Activated CD4-positive, alpha-beta memory T cell treated with anti-CD3 and anti-CD28 coated beads for 36 hours (primary cell): ENCODE measurements at regions of chr1 and their contacts with region 1.

Region 1: DNA sequence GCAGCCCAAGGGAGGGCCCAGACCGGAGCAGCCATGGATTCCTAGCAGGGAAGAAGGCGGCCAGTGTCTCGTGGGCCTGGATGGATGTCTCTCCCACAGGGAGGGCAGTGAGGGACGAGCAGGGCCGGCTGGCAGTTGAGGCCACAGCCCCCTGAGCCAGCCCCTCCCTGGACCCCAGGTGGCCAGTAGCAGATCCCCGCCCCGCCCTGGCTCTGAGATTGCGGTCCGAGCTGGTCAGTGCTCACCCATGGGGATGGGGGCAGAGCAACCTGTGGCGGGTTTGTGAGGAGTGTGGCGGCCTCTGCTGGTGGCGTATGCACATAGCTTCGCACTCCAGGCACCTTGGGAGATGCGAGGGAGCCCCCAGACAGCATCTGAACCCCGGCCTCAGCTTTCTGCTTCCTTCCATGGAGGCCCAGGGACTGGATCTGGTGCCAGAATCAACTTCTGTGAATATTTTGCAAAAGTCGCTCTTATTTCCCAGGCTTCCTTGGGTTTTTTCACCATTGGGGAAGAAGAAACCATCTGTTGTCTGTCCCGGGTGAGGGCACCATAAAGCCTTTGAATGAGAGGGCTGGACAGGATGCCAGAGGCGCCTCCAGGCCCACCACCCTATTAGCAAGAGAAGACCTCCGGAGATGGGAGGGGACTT is 8.4 kb upstream of the KCNN3 start:
- DNase-seq: peak; percentile 84
- H3K4me3 Mint-ChIP-seq: no peak overlapping the region
- H3K27ac Mint-ChIP-seq: no peak overlapping the region
- H3K4me1 Mint-ChIP-seq: peaks cover 14% of the 10 kb centered on the region
- H3K27me3 Mint-ChIP-seq: peaks cover 3% of the 10 kb centered on the region

Region 2: GRCh38 chr1:154772606-154773506 is 105.6 kb before region 1 on chr1:
- CTCF ChIA-PET with region 1: interaction called, 4 read pairs
- POLR2A ChIA-PET with region 1: no interaction called
- intact Hi-C with region 1: loop called (anchors 1 kb)
- DNase-seq: peak; percentile 55
- H3K4me3 Mint-ChIP-seq: no peak overlapping the region
- H3K27ac Mint-ChIP-seq: no peak overlapping the region
- H3K4me1 Mint-ChIP-seq: peaks cover 16% of the 10 kb centered on the region
- H3K27me3 Mint-ChIP-seq: peaks cover 2% of the 10 kb centered on the region